ENCODE measurements at regions of chr2 and their contacts with region 1.

Region 1: DNA sequence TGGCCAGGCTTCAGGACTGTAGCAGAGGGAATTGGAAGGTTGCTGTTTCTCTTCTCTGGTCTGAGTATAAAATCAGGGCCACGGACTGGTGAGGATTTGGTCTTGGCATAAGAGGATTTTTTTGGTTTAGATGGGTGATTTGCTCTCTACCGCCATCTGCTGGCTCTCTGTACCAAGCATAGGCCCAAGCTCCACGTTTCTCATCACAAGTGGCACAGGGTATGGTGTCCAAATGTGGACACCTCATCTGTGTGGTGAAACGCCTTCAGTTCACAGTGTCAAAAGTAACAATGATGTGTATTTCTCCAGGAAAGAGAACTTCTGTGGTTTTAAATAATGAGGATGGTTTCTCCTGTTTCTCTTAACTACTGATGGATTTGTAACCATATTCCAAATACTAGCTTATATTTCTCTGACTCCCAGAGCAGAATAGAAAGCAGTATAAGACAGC is 115.1 kb downstream of the EML6 start:
- DNase-seq: peak; percentile 27
- ATAC-seq: peak; percentile 91
- H3K4me3 Mint-ChIP-seq: no peak overlapping the region
- H3K27ac Mint-ChIP-seq: no peak overlapping the region
- H3K4me1 Mint-ChIP-seq: peaks cover 4% of the 10 kb centered on the region
- H3K27me3 Mint-ChIP-seq: no peaks in the 10 kb centered on the region
- CTCF ChIP-seq: peak; percentile 58

Region 2: GRCh38 chr2:54657664-54658083 is 180.9 kb before region 1 on chr2:
- CTCF ChIA-PET with region 1: interaction called, 21 read pairs
- POLR2A ChIA-PET with region 1: no interaction called
- intact Hi-C with region 1: loop called (anchors 1 kb)
- DNase-seq: no peak
- ATAC-seq: peak; percentile 73
- H3K4me3 Mint-ChIP-seq: no peak overlapping the region
- H3K27ac Mint-ChIP-seq: peak overlapping the region; percentile 46
- H3K4me1 Mint-ChIP-seq: no peaks in the 10 kb centered on the region
- H3K27me3 Mint-ChIP-seq: no peaks in the 10 kb centered on the region
- CTCF ChIP-seq: no peak

Region 3: DNA sequence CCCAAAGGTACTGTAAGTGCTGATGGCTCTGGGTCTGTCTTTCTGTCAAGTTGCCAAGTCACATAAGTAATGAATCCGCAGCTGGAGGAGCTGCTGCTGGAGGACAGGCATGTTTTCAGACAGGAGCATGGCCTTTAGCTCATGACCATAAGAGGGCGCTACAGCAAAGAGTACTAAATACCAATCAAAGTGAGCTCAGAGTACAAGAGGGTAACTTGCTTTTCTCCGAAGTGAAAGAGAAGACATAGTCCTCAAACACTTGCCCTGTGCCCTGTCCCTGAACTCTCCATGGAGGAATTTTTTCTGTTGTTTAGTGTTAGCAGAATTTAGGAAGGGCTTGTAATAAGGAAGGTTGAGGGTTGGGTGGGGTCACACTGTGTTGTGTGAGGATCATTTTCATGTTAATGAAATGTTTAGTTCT is 173.2 kb before region 1 on chr2:
- CTCF ChIA-PET with region 1: interaction called, 46 read pairs
- POLR2A ChIA-PET with region 1: interaction called, 3 read pairs
- intact Hi-C with region 1: loop called (anchors 1 kb)
- DNase-seq: no peak
- ATAC-seq: peak; percentile 52
- H3K4me3 Mint-ChIP-seq: no peak overlapping the region
- H3K27ac Mint-ChIP-seq: no peak overlapping the region
- H3K4me1 Mint-ChIP-seq: no peaks in the 10 kb centered on the region
- H3K27me3 Mint-ChIP-seq: no peaks in the 10 kb centered on the region
- CTCF ChIP-seq: no peak

Region 4: GRCh38 chr2:54755641-54756326 is 82.8 kb before region 1 on chr2:
- CTCF ChIA-PET with region 1: interaction called, 45 read pairs
- POLR2A ChIA-PET with region 1: interaction called, 14 read pairs
- intact Hi-C with region 1: loop called (anchors 1 kb)
- DNase-seq: no peak
- ATAC-seq: peak; percentile 67
- H3K4me3 Mint-ChIP-seq: peak overlapping the region; percentile 74
- H3K27ac Mint-ChIP-seq: peak overlapping the region; percentile 92
- H3K4me1 Mint-ChIP-seq: peaks cover 50% of the 10 kb centered on the region
- H3K27me3 Mint-ChIP-seq: no peaks in the 10 kb centered on the region
- CTCF ChIP-seq: no peak

Region 5: GRCh38 chr2:55093381-55093780 is 254.8 kb after region 1 on chr2:
- CTCF ChIA-PET with region 1: no interaction called
- POLR2A ChIA-PET with region 1: no interaction called
- intact Hi-C with region 1: no loop called
- DNase-seq: no peak
- ATAC-seq: no peak
- H3K4me3 Mint-ChIP-seq: no peak overlapping the region
- H3K27ac Mint-ChIP-seq: no peak overlapping the region
- H3K4me1 Mint-ChIP-seq: no peaks in the 10 kb centered on the region
- H3K27me3 Mint-ChIP-seq: no peaks in the 10 kb centered on the region
- CTCF ChIP-seq: no peak